Activated CD8-positive, alpha-beta T cell treated with anti-CD3 and anti-CD28 coated beads for 36 hours (primary cell): ENCODE measurements at regions of chr4 and their contacts with region 1.

Region 1: GRCh38 chr4:17324386-17324830 is 187.5 kb downstream of the QDPR start:
- DNase-seq: peak; percentile 74
- ATAC-seq: peak; percentile 89
- H3K4me3 Mint-ChIP-seq: peak overlapping the region; percentile 18
- H3K27ac Mint-ChIP-seq: peak overlapping the region; percentile 73
- H3K4me1 Mint-ChIP-seq: peaks cover 15% of the 10 kb centered on the region
- H3K27me3 Mint-ChIP-seq: no peaks in the 10 kb centered on the region
- CTCF ChIP-seq: peak; percentile 59

Region 2: DNA sequence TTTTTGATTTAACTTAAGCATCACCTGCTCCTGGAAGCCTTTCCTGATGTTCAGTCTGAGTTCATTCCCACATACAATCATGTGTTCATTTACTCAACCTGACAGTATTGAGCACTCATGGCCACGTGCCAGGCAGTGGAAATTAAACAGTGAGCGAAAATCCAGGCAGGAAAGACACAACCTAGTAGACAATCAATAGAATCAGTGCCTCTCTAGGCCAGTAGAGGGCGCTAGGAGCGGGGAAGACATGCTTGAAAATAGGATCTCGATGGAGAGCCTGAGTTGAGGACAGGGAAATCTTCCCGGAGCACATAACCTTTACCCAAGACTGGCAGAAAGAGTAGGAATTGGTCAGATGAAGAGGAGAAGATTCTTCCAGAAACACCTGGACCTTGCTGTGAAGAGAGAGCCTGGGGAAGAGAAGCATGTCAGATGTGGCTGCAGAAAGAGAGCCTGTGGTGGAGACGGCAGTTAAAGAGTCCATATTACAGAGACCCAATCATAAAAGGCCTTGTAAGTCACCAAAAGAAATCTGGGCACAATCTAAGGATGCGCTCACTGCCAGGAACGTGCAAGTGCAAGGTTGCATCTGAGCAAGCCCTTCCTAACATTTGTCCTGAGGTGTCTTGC is 529.5 kb before region 1 on chr4:
- CTCF ChIA-PET with region 1: interaction called, 16 read pairs
- POLR2A ChIA-PET with region 1: no interaction called
- intact Hi-C with region 1: loop called (anchors 10 kb)
- DNase-seq: peak; percentile 65
- ATAC-seq: no peak
- H3K4me3 Mint-ChIP-seq: no peak overlapping the region
- H3K27ac Mint-ChIP-seq: no peak overlapping the region
- H3K4me1 Mint-ChIP-seq: no peaks in the 10 kb centered on the region
- H3K27me3 Mint-ChIP-seq: no peaks in the 10 kb centered on the region
- CTCF ChIP-seq: peak; percentile 80

Region 3: GRCh38 chr4:16916719-16917337 is 407.6 kb before region 1 on chr4:
- CTCF ChIA-PET with region 1: interaction called, 10 read pairs
- POLR2A ChIA-PET with region 1: no interaction called
- intact Hi-C with region 1: no loop called
- DNase-seq: peak; percentile 90
- ATAC-seq: peak; percentile 98
- H3K4me3 Mint-ChIP-seq: no peak overlapping the region
- H3K27ac Mint-ChIP-seq: no peak overlapping the region
- H3K4me1 Mint-ChIP-seq: peaks cover 3% of the 10 kb centered on the region
- H3K27me3 Mint-ChIP-seq: no peaks in the 10 kb centered on the region
- CTCF ChIP-seq: peak; percentile 97

Region 4: GRCh38 chr4:17313194-17313593 is 11.2 kb before region 1 on chr4:
- CTCF ChIA-PET with region 1: interaction called, 11 read pairs
- POLR2A ChIA-PET with region 1: interaction called, 3 read pairs
- intact Hi-C with region 1: no loop called
- DNase-seq: no peak
- ATAC-seq: no peak
- H3K4me3 Mint-ChIP-seq: no peak overlapping the region
- H3K27ac Mint-ChIP-seq: no peak overlapping the region
- H3K4me1 Mint-ChIP-seq: peaks cover 8% of the 10 kb centered on the region
- H3K27me3 Mint-ChIP-seq: peaks cover 13% of the 10 kb centered on the region
- CTCF ChIP-seq: no peak

Region 5: GRCh38 chr4:17336524-17336961 is 12.1 kb after region 1 on chr4:
- CTCF ChIA-PET with region 1: interaction called, 21 read pairs
- POLR2A ChIA-PET with region 1: no interaction called
- intact Hi-C with region 1: no loop called
- DNase-seq: peak; percentile 88
- ATAC-seq: peak; percentile 93
- H3K4me3 Mint-ChIP-seq: peak overlapping the region; percentile 41
- H3K27ac Mint-ChIP-seq: peak overlapping the region; percentile 94
- H3K4me1 Mint-ChIP-seq: peaks cover 43% of the 10 kb centered on the region
- H3K27me3 Mint-ChIP-seq: no peaks in the 10 kb centered on the region
- CTCF ChIP-seq: no peak

Region 6: DNA sequence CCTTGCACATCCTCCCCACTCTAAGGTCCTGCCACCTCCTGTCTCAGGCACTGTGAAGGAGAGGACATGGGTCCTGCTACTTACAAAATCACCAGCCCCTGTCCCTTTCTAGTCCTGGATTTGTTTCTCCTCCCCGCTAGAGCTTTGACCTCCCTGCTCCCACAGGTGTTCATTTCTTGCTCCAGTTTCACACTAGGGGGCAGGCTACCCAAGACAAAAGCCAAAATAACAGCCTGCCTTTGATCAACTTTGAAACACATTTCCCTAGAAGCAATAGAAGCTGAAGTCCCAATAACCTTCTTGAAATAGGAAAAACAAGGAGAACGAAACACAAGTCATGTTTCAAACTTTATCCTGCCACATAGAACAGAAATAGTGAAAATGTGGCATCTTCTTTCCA is 23.0 kb after region 1 on chr4:
- CTCF ChIA-PET with region 1: interaction called, 11 read pairs
- POLR2A ChIA-PET with region 1: no interaction called
- intact Hi-C with region 1: no loop called
- DNase-seq: peak; percentile 58
- ATAC-seq: peak; percentile 61
- H3K4me3 Mint-ChIP-seq: no peak overlapping the region
- H3K27ac Mint-ChIP-seq: no peak overlapping the region
- H3K4me1 Mint-ChIP-seq: no peaks in the 10 kb centered on the region
- H3K27me3 Mint-ChIP-seq: no peaks in the 10 kb centered on the region
- CTCF ChIP-seq: peak; percentile 49

Region 7: GRCh38 chr4:17619416-17620105 is 295.2 kb after region 1 on chr4:
- CTCF ChIA-PET with region 1: no interaction called
- POLR2A ChIA-PET with region 1: no interaction called
- intact Hi-C with region 1: no loop called
- DNase-seq: no peak
- ATAC-seq: no peak
- H3K4me3 Mint-ChIP-seq: no peak overlapping the region
- H3K27ac Mint-ChIP-seq: peak overlapping the region; percentile 83
- H3K4me1 Mint-ChIP-seq: peaks cover 41% of the 10 kb centered on the region
- H3K27me3 Mint-ChIP-seq: no peaks in the 10 kb centered on the region
- CTCF ChIP-seq: no peak